Activated naive CD4-positive, alpha-beta T cell treated with anti-CD3 and anti-CD28 coated beads for 36 hours (primary cell): ENCODE measurements at regions of chr19 and their contacts with region 1.

Region 1: GRCh38 chr19:45455707-45456499 is 11.9 kb upstream of the FOSB start:
- DNase-seq: peak; percentile 79
- H3K4me3 Mint-ChIP-seq: no peak overlapping the region
- H3K27ac Mint-ChIP-seq: no peak overlapping the region
- H3K4me1 Mint-ChIP-seq: peaks cover 25% of the 10 kb centered on the region
- H3K27me3 Mint-ChIP-seq: peaks cover 2% of the 10 kb centered on the region

Region 2: GRCh38 chr19:45670670-45671453 is 215.0 kb after region 1 on chr19:
- CTCF ChIA-PET with region 1: no interaction called
- intact Hi-C with region 1: loop called (anchors 2 kb)
- DNase-seq: peak; percentile 78
- H3K4me3 Mint-ChIP-seq: peak overlapping the region; percentile 41
- H3K27ac Mint-ChIP-seq: no peak overlapping the region
- H3K4me1 Mint-ChIP-seq: peaks cover 36% of the 10 kb centered on the region
- H3K27me3 Mint-ChIP-seq: peaks cover 20% of the 10 kb centered on the region